Gastrocnemius medialis (tissue), 4 donors: ENCODE measurements at regions of chr21 and their contacts with region 1.

Region 1: GRCh38 chr21:16308269-16308668 is 578.5 kb downstream of the USP25 start:
- DNase-seq: no peak
- ATAC-seq: peak in 1 of 2 donors; percentile 37
- H3K4me3 ChIP-seq: peak overlapping the region; percentile 45 to 52 (median 50)
- H3K27ac ChIP-seq: peak overlapping the region; percentile 63 to 85 (median 82)
- H3K4me1 ChIP-seq: peaks cover 5 to 9% of the 10 kb centered on the region in 2 donors
- H3K27me3 ChIP-seq: no peaks in the 10 kb centered on the region
- CTCF ChIP-seq: no peak
- POLR2A ChIP-seq: no peak

Region 2: GRCh38 chr21:16211339-16212303 is 96.6 kb before region 1 on chr21:
- in situ Hi-C with region 1: no loop called
- intact Hi-C with region 1: loop called (anchors 5 kb)
- DNase-seq: no peak
- ATAC-seq: peak; percentile 86 to 92
- H3K4me3 ChIP-seq: peak overlapping the region; percentile 39 to 58 (median 48)
- H3K27ac ChIP-seq: peak overlapping the region; percentile 83 to 93 (median 87)
- H3K4me1 ChIP-seq: peaks cover 6 to 34% of the 10 kb centered on the region in 2 donors
- H3K27me3 ChIP-seq: no peaks in the 10 kb centered on the region
- CTCF ChIP-seq: no peak
- POLR2A ChIP-seq: peak in 1 of 2 donors; percentile 60

Region 3: GRCh38 chr21:16419188-16419921 is 111.1 kb after region 1 on chr21:
- in situ Hi-C with region 1: loop called in 1 of 4 experiments (anchors 10 kb)
- intact Hi-C with region 1: loop called (anchors 2 kb)
- DNase-seq: peak; percentile 52 to 59
- ATAC-seq: peak; percentile 64 to 66
- H3K4me3 ChIP-seq: peak overlapping the region; percentile 51 to 60 (median 56)
- H3K27ac ChIP-seq: peak overlapping the region; percentile 86 to 91 (median 90)
- H3K4me1 ChIP-seq: peaks cover 4 to 15% of the 10 kb centered on the region in 2 donors
- H3K27me3 ChIP-seq: no peaks in the 10 kb centered on the region
- CTCF ChIP-seq: no peak
- POLR2A ChIP-seq: no peak

Region 4: DNA sequence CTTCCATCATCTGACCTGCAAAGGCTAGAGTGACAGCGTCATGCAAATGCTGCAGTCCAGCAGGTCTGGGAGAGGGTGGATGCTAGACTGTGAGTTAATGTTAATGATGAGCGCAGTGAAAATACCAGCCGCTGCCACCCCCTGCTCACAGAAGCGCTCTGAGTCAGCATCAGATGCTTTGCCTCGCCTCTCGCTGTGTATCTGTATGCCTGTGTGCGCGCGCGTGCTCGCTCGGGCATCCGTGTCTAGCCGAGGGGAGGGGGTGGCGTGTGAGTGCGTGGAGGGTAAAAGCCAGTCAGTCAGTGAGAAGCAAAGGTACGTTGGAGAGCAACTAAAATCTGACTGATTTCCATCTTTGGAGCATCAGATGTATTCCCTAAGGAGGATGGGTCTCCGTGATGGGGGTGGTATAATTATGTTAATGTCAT is 280.2 kb after region 1 on chr21:
- in situ Hi-C with region 1: loop called in 1 of 4 experiments (anchors 10 kb)
- intact Hi-C with region 1: loop called (anchors 10 kb)
- DNase-seq: peak; percentile 63 to 73
- ATAC-seq: peak; percentile 71 to 72
- H3K4me3 ChIP-seq: peak overlapping the region; percentile 47 to 55 (median 50)
- H3K27ac ChIP-seq: peak overlapping the region; percentile 74 to 80 (median 80)
- H3K4me1 ChIP-seq: peaks cover 13 to 18% of the 10 kb centered on the region in 2 donors
- H3K27me3 ChIP-seq: no peaks in the 10 kb centered on the region
- CTCF ChIP-seq: no peak
- POLR2A ChIP-seq: peak; percentile 44 to 50